Vagina (tissue), 2 donors: ENCODE measurements at regions of chr1 and their contacts with region 1.

Region 1: DNA sequence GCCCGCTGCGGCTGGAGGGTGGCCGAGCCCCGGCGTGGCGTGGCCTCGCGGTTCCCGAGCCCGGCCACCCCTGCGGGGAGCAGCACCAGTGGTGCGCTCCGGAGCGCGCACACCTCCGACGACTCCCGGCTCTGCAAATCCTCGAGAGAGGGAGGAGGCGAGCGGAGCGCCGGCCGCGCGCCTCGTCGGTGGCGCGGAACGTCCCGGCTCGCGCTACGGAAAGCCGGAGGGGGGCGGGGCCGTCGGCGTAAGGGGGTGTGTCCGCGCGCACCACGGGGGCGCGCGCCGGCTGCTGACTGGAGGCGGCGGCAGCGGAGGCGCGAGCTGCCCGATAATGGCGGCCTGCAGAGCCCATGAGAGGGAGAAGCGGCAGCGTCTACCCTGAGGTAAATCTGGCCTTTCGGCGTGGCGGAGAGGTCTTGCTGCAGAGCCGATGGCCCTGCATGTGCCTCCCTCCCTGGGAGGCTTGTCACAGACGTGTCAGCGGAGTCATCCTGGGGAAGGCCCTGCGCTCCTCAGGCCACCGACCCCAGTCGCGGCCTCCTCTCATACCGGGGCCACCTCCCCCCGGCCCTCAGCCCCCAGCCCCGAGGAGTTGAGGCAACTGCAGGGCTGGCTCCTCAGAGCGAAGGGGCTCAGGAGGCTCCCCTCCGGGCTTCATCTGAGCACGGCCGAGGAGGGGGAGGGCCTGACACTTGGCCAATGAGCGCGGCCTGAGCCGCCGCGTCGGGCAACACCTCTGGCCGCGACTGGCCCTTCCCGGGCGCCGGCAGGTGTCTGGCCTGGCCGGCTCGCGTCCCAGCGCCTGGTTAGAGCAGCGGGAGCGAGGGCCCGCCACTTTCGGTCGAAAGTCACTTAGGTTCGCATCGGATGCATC is at the start of gene PDIK1L:
- DNase-seq: peak in 1 of 2 donors; percentile 93
- H3K4me3 ChIP-seq: peak within 1 kb of the TSS; percentile 97 to 99
- H3K27ac ChIP-seq: peak within 1 kb of the TSS; percentile 92
- H3K4me1 ChIP-seq: peaks cover 20% of the 10 kb centered on the region
- H3K27me3 ChIP-seq: no peaks in the 10 kb centered on the region
- CTCF ChIP-seq: no peak
- POLR2A ChIP-seq: peak in 1 of 2 donors; percentile 53
- total RNA-seq, gene PDIK1L: 5.6 TPM

Region 2: GRCh38 chr1:26161415-26162219 is 49.8 kb after region 1 on chr1:
- intact Hi-C with region 1: loop called (anchors 5 kb)
- DNase-seq: no peak
- H3K4me3 ChIP-seq: peak overlapping the region; percentile 41 to 50
- H3K27ac ChIP-seq: peak overlapping the region; percentile 10
- H3K4me1 ChIP-seq: peaks cover 14% of the 10 kb centered on the region
- H3K27me3 ChIP-seq: peaks cover 4% of the 10 kb centered on the region
- CTCF ChIP-seq: no peak
- POLR2A ChIP-seq: no peak